Activated CD8-positive, alpha-beta T cell treated with anti-CD3 and anti-CD28 coated beads, Interleukin-2, amount 10 ng/mL, durations not matched to agents 7 days and 5 days (primary cell): ENCODE measurements at regions of chr15 and their contacts with region 1.

Region 1: GRCh38 chr15:72285927-72286516 is 13.7 kb upstream of the PARP6 start:
- DNase-seq: peak; percentile 46
- ATAC-seq: peak; percentile 58
- H3K4me3 Mint-ChIP-seq: no peak overlapping the region
- H3K27ac Mint-ChIP-seq: no peak overlapping the region
- H3K4me1 Mint-ChIP-seq: no peaks in the 10 kb centered on the region
- H3K27me3 Mint-ChIP-seq: no peaks in the 10 kb centered on the region

Region 2: GRCh38 chr15:72168111-72168808 is 117.8 kb before region 1 on chr15:
- CTCF ChIA-PET with region 1: no interaction called
- POLR2A ChIA-PET with region 1: no interaction called
- DNase-seq: peak; percentile 67
- ATAC-seq: peak; percentile 88
- H3K4me3 Mint-ChIP-seq: peak overlapping the region; percentile 42
- H3K27ac Mint-ChIP-seq: peak overlapping the region; percentile 84
- H3K4me1 Mint-ChIP-seq: peaks cover 27% of the 10 kb centered on the region
- H3K27me3 Mint-ChIP-seq: peaks cover 9% of the 10 kb centered on the region

Region 3: GRCh38 chr15:72199711-72200212 is 86.3 kb before region 1 on chr15:
- CTCF ChIA-PET with region 1: interaction called, 12 read pairs
- POLR2A ChIA-PET with region 1: no interaction called
- DNase-seq: peak; percentile 80
- ATAC-seq: peak; percentile 77
- H3K4me3 Mint-ChIP-seq: no peak overlapping the region
- H3K27ac Mint-ChIP-seq: peak overlapping the region; percentile 49
- H3K4me1 Mint-ChIP-seq: peaks cover 19% of the 10 kb centered on the region
- H3K27me3 Mint-ChIP-seq: peaks cover 14% of the 10 kb centered on the region

Region 4: DNA sequence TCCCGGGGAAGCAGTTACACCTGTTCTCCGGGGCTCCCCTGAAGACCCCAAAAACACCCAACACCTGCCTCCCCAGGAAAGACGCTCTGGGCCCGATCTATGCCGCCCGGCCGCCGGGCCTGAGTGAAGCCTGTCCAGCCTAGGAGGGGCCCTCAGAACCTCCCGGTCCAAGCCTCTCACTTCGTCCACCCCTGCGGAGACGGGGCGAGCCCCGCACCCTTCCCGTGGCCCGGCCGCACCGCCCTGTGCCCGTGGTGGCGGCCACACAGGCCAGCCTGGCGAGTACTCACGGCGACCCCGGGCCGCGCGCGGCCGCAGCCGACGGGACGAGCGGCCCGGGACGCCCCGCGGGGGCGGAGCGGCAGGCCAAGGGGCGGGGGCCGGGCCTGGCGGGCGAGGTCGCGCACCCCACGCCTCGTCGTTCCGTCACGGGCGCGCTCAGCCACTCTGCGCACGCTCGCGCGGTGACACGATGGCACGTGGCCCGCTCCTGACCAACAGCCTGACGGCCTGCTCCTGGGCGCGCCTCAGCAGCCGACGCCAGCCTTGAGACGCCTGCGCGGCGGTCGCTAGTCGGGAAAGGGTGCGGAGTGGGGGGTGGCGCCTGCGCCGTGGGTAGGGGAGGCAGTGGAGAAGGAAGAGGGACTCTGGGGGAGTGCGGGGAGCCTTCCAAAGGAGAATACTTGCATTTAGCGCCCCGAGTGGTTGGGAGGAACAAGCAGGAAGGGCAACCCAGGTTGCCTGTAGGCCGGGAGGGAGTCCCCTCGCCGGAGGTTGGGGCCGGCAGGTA is 13.6 kb before region 1 on chr15 and contains the start of gene PARP6:
- CTCF ChIA-PET with region 1: interaction called, 13 read pairs
- POLR2A ChIA-PET with region 1: no interaction called
- DNase-seq: peak; percentile 97
- ATAC-seq: peak; percentile 99
- H3K4me3 Mint-ChIP-seq: peak within 1 kb of the TSS; percentile 88
- H3K27ac Mint-ChIP-seq: peak within 1 kb of the TSS; percentile 82
- H3K4me1 Mint-ChIP-seq: peaks cover 34% of the 10 kb centered on the region
- H3K27me3 Mint-ChIP-seq: peaks cover 2% of the 10 kb centered on the region
- total RNA-seq, gene PARP6: 54.0 to 57.0 TPM